Pancreas (tissue), 10 donors: ENCODE measurements at regions of chr9 and their contacts with region 1.

Region 1: GRCh38 chr9:15205632-15206420 is 101.2 kb downstream of the TTC39B start:
- DNase-seq: no peak
- ATAC-seq: no peak
- H3K4me3 ChIP-seq: no peak overlapping the region
- H3K27ac ChIP-seq: no peak overlapping the region
- H3K4me1 ChIP-seq: no peaks in the 10 kb centered on the region
- H3K27me3 ChIP-seq: no peaks in the 10 kb centered on the region
- CTCF ChIP-seq: no peak

Region 2: DNA sequence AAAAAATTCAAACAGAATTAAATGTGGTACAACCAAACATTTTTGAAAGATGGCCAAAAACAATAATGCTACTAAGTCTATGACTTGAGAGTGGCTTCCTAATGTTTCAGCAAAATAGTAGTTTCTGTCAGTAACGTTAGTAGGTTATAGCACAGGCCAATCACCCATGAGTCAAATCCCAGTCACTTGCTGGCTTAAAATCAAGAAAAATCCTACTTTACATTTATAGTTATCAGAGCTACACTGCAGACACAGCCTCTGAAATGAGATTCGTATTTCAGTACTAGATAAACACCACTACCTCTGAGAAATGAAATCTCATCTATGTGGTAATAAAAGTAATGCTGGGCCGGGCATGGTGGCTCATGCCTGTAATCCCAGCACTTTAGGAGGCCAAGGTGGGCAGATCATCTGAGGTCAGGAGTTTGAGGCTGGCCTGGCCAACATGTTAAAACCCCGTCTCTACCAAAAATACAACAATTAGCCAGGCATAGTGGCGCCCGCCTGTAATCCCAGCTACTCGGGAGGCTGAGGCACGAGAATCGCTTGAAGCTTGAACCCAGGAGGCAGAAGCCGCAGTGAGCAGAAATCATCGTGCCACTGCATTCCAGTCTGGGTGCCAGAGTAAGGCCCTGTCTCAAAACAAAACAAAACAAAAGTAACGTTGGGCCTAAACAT is 518.6 kb before region 1 on chr9:
- intact Hi-C with region 1: no loop called
- DNase-seq: no peak
- ATAC-seq: no peak
- H3K4me3 ChIP-seq: no peak overlapping the region
- H3K27ac ChIP-seq: no peak overlapping the region
- H3K4me1 ChIP-seq: peaks cover 0 to 7% (median 0%) of the 10 kb centered on the region in 3 donors
- H3K27me3 ChIP-seq: no peaks in the 10 kb centered on the region
- CTCF ChIP-seq: no peak

Region 3: DNA sequence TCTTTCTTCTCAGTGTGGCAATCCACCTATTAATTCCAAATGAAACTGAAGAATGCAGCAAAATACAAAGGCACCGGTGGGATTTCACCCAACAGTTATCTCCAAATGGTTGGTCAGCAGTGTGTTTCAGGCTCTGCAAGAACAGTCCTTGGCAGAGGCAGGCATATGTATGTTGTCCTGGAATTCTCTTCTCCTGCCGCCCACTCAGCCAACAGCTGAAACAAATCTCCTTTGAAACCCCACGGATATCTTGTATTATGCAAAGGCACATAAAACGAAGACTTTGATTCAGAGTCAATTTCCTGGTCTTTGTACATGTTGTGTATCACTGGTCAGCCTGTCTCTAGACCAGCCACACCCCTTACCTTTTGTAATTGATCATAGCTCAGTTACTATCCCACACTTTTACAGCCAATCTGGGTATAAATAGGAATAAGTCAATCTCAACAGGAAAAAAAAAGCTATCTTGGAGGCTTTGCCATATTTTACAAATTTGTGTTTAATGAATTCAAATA is 324.8 kb before region 1 on chr9:
- intact Hi-C with region 1: no loop called
- DNase-seq: no peak
- ATAC-seq: no peak
- H3K4me3 ChIP-seq: no peak overlapping the region
- H3K27ac ChIP-seq: no peak overlapping the region
- H3K4me1 ChIP-seq: peaks cover 0 to 3% (median 0%) of the 10 kb centered on the region in 3 donors
- H3K27me3 ChIP-seq: no peaks in the 10 kb centered on the region
- CTCF ChIP-seq: no peak

Region 4: GRCh38 chr9:15606643-15607472 is 401.0 kb after region 1 on chr9:
- intact Hi-C with region 1: loop called in 1 of 3 experiments (anchors 10 kb)
- DNase-seq: no peak
- ATAC-seq: peak; percentile 38 to 70 (median 60)
- H3K4me3 ChIP-seq: no peak overlapping the region
- H3K27ac ChIP-seq: no peak overlapping the region
- H3K4me1 ChIP-seq: no peaks in the 10 kb centered on the region
- H3K27me3 ChIP-seq: no peaks in the 10 kb centered on the region
- CTCF ChIP-seq: peak; percentile 38 to 75 (median 68)